MCF 10A (cell line): ENCODE measurements at regions of chr18 and their contacts with region 1.

Region 1: DNA sequence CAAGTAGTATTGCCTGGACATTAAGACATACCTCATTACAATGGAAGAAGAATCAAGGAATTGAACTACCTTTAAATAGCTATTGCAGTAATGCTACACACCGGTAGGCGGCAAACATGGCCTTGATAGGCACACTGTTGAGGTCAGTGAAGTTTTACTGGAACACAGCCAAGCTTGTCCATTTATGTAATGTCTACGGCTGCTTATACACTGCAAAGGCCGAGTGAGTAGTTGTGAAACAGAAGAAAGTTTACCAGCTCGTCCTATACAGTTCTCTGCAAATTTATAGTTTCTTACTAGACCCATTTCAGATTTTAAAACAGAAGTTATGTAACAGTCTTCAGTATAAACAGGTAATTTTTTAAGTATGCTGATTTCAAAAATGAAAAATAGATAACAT is 38.8 kb downstream of the PPP4R1 start:
- DNase-seq: peak; percentile 97
- H3K4me3 Mint-ChIP-seq: no peak overlapping the region
- H3K27ac Mint-ChIP-seq: no peak overlapping the region
- H3K4me1 Mint-ChIP-seq: peaks cover 35% of the 10 kb centered on the region
- H3K27me3 Mint-ChIP-seq: no peaks in the 10 kb centered on the region
- CTCF ChIP-seq: peak; percentile 86

Region 2: GRCh38 chr18:9417073-9417841 is 158.3 kb before region 1 on chr18:
- CTCF ChIA-PET with region 1: no interaction called
- POLR2A ChIA-PET with region 1: no interaction called
- intact Hi-C with region 1: no loop called
- DNase-seq: peak; percentile 36
- H3K4me3 Mint-ChIP-seq: peak overlapping the region; percentile 43
- H3K27ac Mint-ChIP-seq: peak overlapping the region; percentile 80
- H3K4me1 Mint-ChIP-seq: peaks cover 22% of the 10 kb centered on the region
- H3K27me3 Mint-ChIP-seq: no peaks in the 10 kb centered on the region
- CTCF ChIP-seq: no peak

Region 3: DNA sequence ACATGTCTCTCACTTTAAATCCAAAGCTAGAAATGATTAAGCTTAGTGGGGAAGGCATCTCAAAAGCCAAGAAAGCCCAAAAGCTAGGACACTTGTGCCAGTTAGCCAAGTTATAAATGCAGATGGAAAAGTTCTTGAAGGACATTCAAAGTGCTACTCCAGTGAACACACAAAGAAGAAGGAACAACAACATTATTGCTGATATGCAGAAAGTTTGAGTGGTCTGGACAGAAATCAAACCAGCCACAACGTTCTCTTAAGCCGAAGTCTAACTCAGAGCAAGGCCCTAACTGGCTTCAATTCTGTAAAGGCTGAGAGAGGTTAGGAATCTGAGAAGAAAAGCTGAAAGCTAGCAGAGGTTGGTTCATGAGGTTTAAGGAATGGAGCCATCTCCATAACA is 10.2 kb before region 1 on chr18:
- CTCF ChIA-PET with region 1: interaction called, 17 read pairs
- POLR2A ChIA-PET with region 1: interaction called, 12 read pairs
- intact Hi-C with region 1: no loop called
- DNase-seq: no peak
- H3K4me3 Mint-ChIP-seq: no peak overlapping the region
- H3K27ac Mint-ChIP-seq: no peak overlapping the region
- H3K4me1 Mint-ChIP-seq: peaks cover 5% of the 10 kb centered on the region
- H3K27me3 Mint-ChIP-seq: no peaks in the 10 kb centered on the region
- CTCF ChIP-seq: no peak

Region 4: GRCh38 chr18:9594823-9595596 is 19.5 kb after region 1 on chr18:
- CTCF ChIA-PET with region 1: interaction called, 9 read pairs
- POLR2A ChIA-PET with region 1: interaction called, 16 read pairs
- intact Hi-C with region 1: no loop called
- DNase-seq: peak; percentile 17
- H3K4me3 Mint-ChIP-seq: peak overlapping the region; percentile 48
- H3K27ac Mint-ChIP-seq: peak overlapping the region; percentile 57
- H3K4me1 Mint-ChIP-seq: peaks cover 20% of the 10 kb centered on the region
- H3K27me3 Mint-ChIP-seq: no peaks in the 10 kb centered on the region
- CTCF ChIP-seq: no peak

Region 5: DNA sequence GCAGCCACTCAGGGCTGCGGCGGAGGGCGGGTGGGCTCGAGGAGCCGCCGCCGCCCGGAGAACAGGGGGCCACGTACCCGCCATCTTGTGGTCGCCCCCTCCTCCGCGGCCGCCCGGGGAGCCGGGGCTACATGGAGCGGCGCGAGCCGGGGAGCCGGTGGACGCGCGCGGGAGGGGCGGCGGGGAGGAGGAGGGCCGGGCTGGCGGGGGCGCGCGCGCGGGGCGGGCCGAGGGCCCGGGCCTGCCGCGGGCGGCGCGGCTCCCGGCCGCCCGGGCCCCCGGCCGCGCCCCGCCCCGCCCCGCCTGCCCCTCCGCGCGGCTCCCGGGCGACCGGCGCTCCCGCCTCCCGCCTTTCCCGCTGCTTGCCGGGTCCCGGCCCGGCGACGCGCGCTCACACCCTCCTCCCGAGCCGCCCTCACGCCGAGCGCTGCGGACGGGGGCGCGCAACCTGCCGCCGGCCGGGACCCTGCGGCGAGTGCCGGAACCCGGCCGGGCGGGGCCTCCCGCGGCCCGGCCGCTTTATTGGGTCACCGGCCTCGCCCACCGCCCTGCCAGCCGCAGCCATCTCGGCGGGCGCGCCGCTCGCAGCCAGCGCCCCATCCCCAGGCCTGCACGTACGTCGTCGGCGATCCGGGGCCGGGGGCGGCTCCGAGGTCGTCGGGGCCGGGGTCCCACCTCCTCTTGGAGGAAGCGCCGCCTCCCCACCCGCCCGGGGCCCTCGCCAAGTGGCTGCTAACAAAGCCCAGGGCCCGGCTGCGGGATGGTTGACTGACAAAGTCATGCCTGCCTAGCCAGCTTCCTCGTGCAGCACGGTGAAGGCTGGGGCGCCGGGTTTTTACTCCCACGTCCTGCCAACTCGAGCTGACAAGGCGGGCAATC is 39.1 kb after region 1 on chr18 and contains the start of gene PPP4R1:
- CTCF ChIA-PET with region 1: interaction called, 17 read pairs
- POLR2A ChIA-PET with region 1: interaction called, 30 read pairs
- intact Hi-C with region 1: loop called (anchors 1 kb)
- DNase-seq: peak; percentile 68
- H3K4me3 Mint-ChIP-seq: peak within 1 kb of the TSS; percentile 97
- H3K27ac Mint-ChIP-seq: peak within 1 kb of the TSS; percentile 96
- H3K4me1 Mint-ChIP-seq: peaks cover 28% of the 10 kb centered on the region
- H3K27me3 Mint-ChIP-seq: no peaks in the 10 kb centered on the region
- CTCF ChIP-seq: no peak
- total RNA-seq, gene PPP4R1: 88.0 and 109 TPM in 2 replicates

Region 6: GRCh38 chr18:9673296-9674251 is 98.0 kb after region 1 on chr18:
- CTCF ChIA-PET with region 1: interaction called, 14 read pairs
- POLR2A ChIA-PET with region 1: interaction called, 17 read pairs
- intact Hi-C with region 1: loop called (anchors 1 kb)
- DNase-seq: peak; percentile 93
- H3K4me3 Mint-ChIP-seq: peak overlapping the region; percentile 43
- H3K27ac Mint-ChIP-seq: peak overlapping the region; percentile 94
- H3K4me1 Mint-ChIP-seq: peaks cover 17% of the 10 kb centered on the region
- H3K27me3 Mint-ChIP-seq: no peaks in the 10 kb centered on the region
- CTCF ChIP-seq: peak; percentile 21

Region 7: GRCh38 chr18:9708057-9708433 is 132.5 kb after region 1 on chr18 and contains the start of gene RAB31:
- CTCF ChIA-PET with region 1: no interaction called
- POLR2A ChIA-PET with region 1: no interaction called
- intact Hi-C with region 1: no loop called
- DNase-seq: peak; percentile 22
- H3K4me3 Mint-ChIP-seq: peak within 1 kb of the TSS; percentile 60
- H3K27ac Mint-ChIP-seq: peak within 1 kb of the TSS; percentile 55
- H3K4me1 Mint-ChIP-seq: peaks cover 16% of the 10 kb centered on the region
- H3K27me3 Mint-ChIP-seq: no peaks in the 10 kb centered on the region
- CTCF ChIP-seq: no peak
- total RNA-seq, gene RAB31: 4.8 and 6.1 TPM in 2 replicates

Region 8: GRCh38 chr18:9719421-9719981 is 143.9 kb after region 1 on chr18:
- CTCF ChIA-PET with region 1: interaction called, 18 read pairs
- POLR2A ChIA-PET with region 1: interaction called, 4 read pairs
- intact Hi-C with region 1: loop called (anchors 2 kb)
- DNase-seq: peak; percentile 94
- H3K4me3 Mint-ChIP-seq: peak overlapping the region; percentile 68
- H3K27ac Mint-ChIP-seq: peak overlapping the region; percentile 30
- H3K4me1 Mint-ChIP-seq: peaks cover 24% of the 10 kb centered on the region
- H3K27me3 Mint-ChIP-seq: no peaks in the 10 kb centered on the region
- CTCF ChIP-seq: no peak

Region 9: DNA sequence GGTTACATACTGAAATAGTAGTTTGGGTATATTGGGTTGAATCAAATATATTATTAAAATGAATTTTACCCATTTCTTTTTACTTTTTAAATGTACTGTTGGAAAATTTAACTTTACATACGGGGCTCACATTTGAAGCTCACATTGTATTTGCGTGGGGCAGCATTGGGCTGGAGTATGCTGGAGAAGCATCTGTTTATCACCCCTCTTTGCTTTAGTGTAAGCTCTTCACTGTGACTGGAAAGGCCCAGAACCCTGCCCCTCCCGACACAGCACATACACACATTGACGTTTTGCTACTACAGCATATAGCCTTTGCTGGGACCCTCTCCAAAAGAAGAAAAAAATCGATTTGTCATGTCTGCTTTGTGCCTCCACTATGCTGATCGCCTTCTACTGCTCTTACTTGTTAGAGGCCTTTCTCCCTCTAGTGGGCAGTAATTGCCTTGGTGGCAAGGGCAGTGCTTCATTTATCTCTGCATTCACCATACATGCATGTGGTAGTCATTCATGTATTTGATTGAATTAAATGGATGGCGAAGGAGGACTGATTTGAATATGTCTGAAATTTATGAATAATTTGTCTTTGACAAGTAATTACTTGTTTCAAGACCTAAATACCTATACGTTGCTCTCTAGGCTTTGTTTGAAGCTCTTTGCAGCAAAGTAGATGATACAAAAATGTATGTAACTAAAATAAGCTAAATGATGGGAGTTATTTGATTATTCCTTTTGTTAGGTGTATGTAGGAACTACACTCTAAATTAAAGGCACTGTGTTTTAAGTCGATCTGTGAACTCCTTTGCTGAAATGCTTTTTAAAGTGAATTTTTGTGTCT is 375.7 kb after region 1 on chr18:
- CTCF ChIA-PET with region 1: interaction called, 9 read pairs
- POLR2A ChIA-PET with region 1: no interaction called
- intact Hi-C with region 1: loop called (anchors 5 kb)
- DNase-seq: peak; percentile 70
- H3K4me3 Mint-ChIP-seq: no peak overlapping the region
- H3K27ac Mint-ChIP-seq: peak overlapping the region; percentile 64
- H3K4me1 Mint-ChIP-seq: peaks cover 33% of the 10 kb centered on the region
- H3K27me3 Mint-ChIP-seq: no peaks in the 10 kb centered on the region
- CTCF ChIP-seq: peak; percentile 67